Left lung (tissue), 14 donors: ENCODE measurements at regions of chr2 and their contacts with region 1.

Region 1: GRCh38 chr2:186503848-186504606 is 18.0 kb downstream of the ZC3H15 start:
- DNase-seq: peak in 1 of 4 donors; percentile 20
- ATAC-seq: peak; percentile 74
- H3K4me3 ChIP-seq: no peak overlapping the region
- H3K27ac ChIP-seq: no peak overlapping the region
- H3K4me1 ChIP-seq: peaks cover 4 to 7% of the 10 kb centered on the region in 2 donors
- H3K27me3 ChIP-seq: no peaks in the 10 kb centered on the region
- CTCF ChIP-seq: peak; percentile 41 to 48

Region 2: GRCh38 chr2:186605041-186605440 is 101.0 kb after region 1 on chr2:
- intact Hi-C with region 1: no loop called
- DNase-seq: no peak
- ATAC-seq: peak; percentile 36
- H3K4me3 ChIP-seq: no peak overlapping the region
- H3K27ac ChIP-seq: peak overlapping the region; percentile 9 to 35
- H3K4me1 ChIP-seq: peaks cover 0 to 14% of the 10 kb centered on the region in 2 donors
- H3K27me3 ChIP-seq: no peaks in the 10 kb centered on the region
- CTCF ChIP-seq: no peak

Region 3: GRCh38 chr2:186641807-186642321 is 137.8 kb after region 1 on chr2:
- intact Hi-C with region 1: loop called in 1 of 2 experiments (anchors 5 kb)
- DNase-seq: peak in 2 of 4 donors; percentile 29 to 60
- ATAC-seq: peak; percentile 97
- H3K4me3 ChIP-seq: no peak overlapping the region
- H3K27ac ChIP-seq: no peak overlapping the region
- H3K4me1 ChIP-seq: peaks cover 0 to 12% of the 10 kb centered on the region in 2 donors
- H3K27me3 ChIP-seq: no peaks in the 10 kb centered on the region
- CTCF ChIP-seq: peak in 1 of 2 donors; percentile 41